Head of caudate nucleus (tissue), 42 donors: ENCODE measurements at regions of chr9 and their contacts with region 1.

Region 1: DNA sequence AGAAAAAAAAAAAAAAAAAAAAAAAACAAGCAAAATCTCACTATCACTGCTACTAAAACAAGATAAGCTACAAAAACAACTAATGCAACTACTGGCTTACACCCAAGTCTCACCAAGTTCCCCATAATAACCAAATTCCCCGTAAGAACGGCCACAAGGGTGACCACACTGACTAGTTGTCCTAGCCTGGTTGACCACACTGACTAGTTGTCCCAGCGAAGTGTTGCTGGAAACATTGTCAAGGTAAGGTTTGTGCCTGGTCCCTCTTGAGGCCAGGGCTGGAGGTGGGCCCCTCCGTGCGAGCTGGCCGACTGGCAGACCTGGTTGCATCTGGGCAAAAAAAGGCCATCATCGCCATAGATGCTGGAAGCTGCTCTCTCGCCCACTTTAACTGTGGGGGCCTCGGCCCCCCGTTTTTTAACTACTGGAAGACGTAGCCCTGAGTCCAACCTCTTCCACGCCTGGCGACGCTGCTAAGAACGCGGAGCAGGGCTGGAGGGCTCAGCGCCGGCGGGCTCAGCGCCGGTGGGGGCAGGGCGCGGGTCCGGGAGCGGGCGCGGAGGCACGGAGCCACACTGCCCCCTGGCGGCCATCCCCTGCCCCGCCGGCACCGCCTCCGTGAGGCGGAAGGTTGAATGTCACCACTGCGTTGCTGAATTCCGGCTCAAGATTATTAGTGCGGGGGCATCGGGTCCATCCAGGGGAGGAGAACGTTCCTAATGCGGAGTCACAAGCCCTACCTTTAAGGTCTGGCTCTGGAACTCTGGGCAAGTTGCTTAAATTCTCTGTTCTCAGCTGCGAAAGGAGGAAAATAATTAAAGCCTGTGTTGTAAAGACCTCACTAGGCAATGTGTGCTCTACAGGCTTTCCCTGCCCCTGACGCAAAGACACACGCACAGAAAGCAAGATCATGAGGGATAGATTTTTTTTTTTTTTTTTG is 84.0 kb downstream of the HSD17B3 start:
- DNase-seq: peak; percentile 37 to 92 (median 81)

Region 2: GRCh38 chr9:95462249-95463147 is 755.5 kb before region 1 on chr9:
- intact Hi-C with region 1: loop called (anchors 2 kb)
- DNase-seq: peak; percentile 57 to 93 (median 80)

Region 3: GRCh38 chr9:95726756-95727155 is 491.3 kb before region 1 on chr9:
- intact Hi-C with region 1: loop called (anchors 5 kb)
- DNase-seq: peak in 1 of 42 donors; percentile 5

Region 4: GRCh38 chr9:95875305-95876137 is 342.5 kb before region 1 on chr9 and contains the start of gene ERCC6L2:
- intact Hi-C with region 1: loop called (anchors 5 kb)
- DNase-seq: peak; percentile 81 to 97 (median 92)

Region 5: DNA sequence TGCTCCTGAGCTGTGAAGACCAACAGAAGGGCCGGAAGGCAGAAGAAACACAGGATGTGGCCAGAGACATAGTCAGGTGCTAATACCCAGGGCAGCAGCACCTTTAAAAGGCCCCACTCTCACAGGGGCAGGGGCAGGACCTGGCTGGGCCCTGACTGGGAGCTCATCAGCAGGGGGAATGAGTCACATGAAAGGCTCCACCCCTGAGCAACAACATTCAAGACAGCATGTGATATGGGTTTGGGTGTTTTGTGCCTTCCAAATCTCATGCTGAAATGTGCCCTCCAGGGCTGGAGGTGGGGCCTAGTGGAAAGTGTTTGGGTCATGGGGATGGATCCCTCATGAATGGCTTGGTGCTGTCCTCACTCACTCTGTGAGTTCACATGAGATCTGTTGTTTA is 160.9 kb before region 1 on chr9:
- intact Hi-C with region 1: loop called (anchors 10 kb)
- DNase-seq: no peak

Region 6: DNA sequence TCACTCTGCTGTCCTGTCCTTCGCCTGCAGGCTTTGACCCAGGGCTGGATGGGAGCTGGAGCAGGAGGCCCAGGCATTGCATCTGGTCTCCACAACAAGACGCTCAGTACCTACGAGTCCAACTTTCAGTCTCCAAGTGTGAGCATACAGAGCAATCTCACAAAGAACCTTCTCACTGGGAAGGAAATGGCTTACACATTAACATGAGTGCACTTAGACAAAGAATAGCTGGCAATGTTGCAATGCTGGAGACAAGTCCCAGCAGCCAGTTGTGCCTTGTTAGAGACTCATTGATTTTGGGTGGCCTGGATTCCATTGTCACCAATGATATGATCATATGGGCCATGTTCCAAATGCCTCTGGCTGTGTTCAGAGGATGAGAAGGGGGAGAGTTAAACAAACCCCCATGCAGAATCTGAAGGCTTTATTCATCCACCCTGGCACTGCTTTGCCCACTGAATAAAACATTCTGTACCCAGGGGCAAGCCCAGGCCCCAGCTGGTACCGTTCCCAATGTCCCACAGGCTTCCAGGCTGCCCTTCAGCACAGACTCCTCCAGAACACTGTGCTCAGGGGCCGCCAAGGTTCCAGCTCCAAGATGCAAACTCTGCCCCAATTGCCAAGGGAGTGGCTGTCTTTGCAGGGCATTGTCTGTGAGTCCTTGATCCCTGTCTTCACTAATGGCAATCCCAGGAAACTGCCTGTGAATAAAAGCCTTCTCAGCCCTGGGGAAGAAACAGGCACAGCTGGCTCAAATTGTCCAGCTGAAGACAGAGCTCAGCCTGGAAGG is 101.6 kb before region 1 on chr9:
- intact Hi-C with region 1: loop called (anchors 5 kb)
- DNase-seq: peak; percentile 83 to 97 (median 92)